Left ventricle myocardium superior (tissue), 1 donor: ENCODE measurements at regions of chr7 and their contacts with region 1.

Region 1: GRCh38 chr7:149742075-149742701 is 31.2 kb downstream of the ZNF467 start:
- DNase-seq: peak; percentile 76
- ATAC-seq: peak; percentile 86

Region 2: DNA sequence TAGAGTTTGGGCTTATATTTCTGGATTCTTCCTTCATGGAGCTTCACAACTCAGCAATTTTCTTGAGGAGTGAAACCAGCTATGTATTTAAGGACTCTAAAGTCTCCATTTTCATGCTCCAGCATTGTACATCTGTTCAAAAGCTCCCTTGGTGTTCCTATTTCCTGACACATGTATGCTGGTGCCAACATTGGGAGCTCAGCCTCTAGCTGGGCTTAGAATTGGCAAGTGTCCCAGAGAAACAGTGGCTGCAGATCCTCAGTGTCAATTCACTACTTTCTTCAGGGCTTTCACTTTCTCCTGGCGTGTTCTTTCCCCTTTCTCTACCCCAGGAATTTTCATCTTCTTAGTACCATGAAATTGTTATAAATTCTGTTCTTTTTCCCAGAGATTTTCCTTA is 71.9 kb before region 1 on chr7:
- intact Hi-C with region 1: loop called (anchors 5 kb)
- DNase-seq: no peak
- ATAC-seq: peak; percentile 96